Colonic mucosa (tissue), 4 donors: ENCODE measurements at regions of chr5 and their contacts with region 1.

Region 1: DNA sequence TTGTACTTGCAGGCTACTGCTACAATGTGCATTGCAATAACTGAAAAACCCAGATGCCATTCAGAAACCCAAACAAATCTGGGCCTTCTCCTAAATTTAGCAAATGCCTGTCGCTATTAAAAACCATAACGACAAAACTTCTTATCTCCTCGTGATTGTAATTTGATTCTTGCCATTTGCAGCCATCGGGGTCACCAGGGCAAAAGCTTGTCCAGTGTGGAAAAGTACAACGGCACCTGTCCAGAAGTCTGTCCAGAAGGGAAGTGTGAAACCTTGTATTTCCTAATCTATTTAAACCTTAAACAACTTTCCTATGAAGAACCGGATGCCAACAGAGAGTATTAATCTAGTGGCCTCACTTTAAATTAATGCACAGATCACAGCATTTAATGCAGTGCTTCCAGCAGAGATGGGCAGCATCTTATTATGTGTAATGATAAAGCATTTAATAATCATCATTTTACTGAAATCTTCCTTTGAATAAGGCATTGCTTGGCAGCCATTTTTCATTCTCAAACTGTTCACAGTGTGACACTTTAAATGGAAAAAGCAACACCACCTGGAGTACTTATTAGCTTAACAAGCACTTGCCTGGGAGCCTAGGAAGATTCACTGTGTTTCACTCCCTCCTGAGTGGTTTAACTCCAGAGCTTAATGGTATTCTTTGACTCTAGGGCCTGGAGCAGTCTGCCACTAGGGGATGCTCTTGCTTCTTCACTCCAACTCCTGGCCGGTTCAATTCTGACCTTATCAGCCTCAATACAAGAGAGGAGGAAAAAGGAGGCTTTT is 4.9 kb upstream of the C7 start:
- DNase-seq: peak; percentile 72
- H3K4me3 ChIP-seq: no peak overlapping the region
- H3K27ac ChIP-seq: no peak overlapping the region
- H3K4me1 ChIP-seq: no peaks in the 10 kb centered on the region
- H3K27me3 ChIP-seq: no peaks in the 10 kb centered on the region
- CTCF ChIP-seq: peak; percentile 82

Region 2: GRCh38 chr5:41143131-41143901 is 238.9 kb after region 1 on chr5:
- intact Hi-C with region 1: no loop called
- DNase-seq: no peak
- H3K4me3 ChIP-seq: no peak overlapping the region
- H3K27ac ChIP-seq: no peak overlapping the region
- H3K4me1 ChIP-seq: no peaks in the 10 kb centered on the region
- H3K27me3 ChIP-seq: no peaks in the 10 kb centered on the region
- CTCF ChIP-seq: no peak

Region 3: GRCh38 chr5:41346609-41347008 is 442.2 kb after region 1 on chr5:
- intact Hi-C with region 1: loop called (anchors 5 kb)
- DNase-seq: no peak
- H3K4me3 ChIP-seq: no peak overlapping the region
- H3K27ac ChIP-seq: no peak overlapping the region
- H3K4me1 ChIP-seq: no peaks in the 10 kb centered on the region
- H3K27me3 ChIP-seq: no peaks in the 10 kb centered on the region
- CTCF ChIP-seq: no peak

Region 4: GRCh38 chr5:41524174-41524573 is 619.8 kb after region 1 on chr5:
- intact Hi-C with region 1: loop called (anchors 5 kb)
- DNase-seq: no peak
- H3K4me3 ChIP-seq: no peak overlapping the region
- H3K27ac ChIP-seq: no peak overlapping the region
- H3K4me1 ChIP-seq: no peaks in the 10 kb centered on the region
- H3K27me3 ChIP-seq: no peaks in the 10 kb centered on the region
- CTCF ChIP-seq: no peak

Region 5: DNA sequence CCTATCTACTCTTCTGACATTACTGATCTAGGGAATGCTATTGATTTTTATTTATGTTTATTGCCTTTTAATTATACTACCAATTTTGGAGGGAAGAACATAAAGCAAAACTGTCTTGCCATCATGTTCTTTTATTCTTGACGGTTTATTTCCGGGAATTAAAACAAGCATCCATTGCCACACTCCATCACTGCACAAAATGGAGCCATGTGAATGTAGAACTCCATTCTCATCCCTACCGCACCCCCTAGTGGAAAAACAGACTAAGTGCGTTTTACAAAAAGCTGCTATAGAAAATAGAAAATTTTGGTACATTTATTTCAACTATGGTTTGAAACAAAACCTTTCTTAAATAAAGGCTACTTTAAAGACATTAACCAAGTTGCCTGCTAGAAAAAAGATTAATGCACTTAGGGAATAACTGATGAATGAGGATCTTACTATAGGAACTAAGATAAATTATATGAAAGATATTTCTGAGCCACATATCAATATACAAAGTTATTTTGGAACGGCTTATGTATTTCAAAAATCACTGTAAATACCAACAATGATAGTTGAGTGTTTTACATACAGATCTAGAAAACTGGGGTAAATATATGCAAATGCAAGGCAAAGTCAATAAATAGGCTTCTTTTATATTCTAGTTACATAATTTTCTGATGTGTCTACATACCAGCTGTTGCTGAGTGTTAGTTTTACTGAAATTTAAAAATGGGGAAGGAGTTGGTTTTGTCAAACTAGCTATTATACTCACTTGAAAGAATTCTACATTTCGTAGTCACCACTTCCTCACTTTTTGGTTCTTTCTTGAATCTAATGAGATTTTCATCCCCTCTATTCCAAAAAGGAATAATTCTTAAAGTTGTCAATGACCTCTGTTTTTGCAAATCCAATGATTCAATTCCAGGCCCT is 939.3 kb after region 1 on chr5:
- intact Hi-C with region 1: loop called (anchors 5 kb)
- DNase-seq: peak; percentile 57
- H3K4me3 ChIP-seq: no peak overlapping the region
- H3K27ac ChIP-seq: no peak overlapping the region
- H3K4me1 ChIP-seq: no peaks in the 10 kb centered on the region
- H3K27me3 ChIP-seq: no peaks in the 10 kb centered on the region
- CTCF ChIP-seq: peak; percentile 84